Gastrocnemius medialis (tissue), 4 donors: ENCODE measurements at regions of chr2 and their contacts with region 1.

Region 1: DNA sequence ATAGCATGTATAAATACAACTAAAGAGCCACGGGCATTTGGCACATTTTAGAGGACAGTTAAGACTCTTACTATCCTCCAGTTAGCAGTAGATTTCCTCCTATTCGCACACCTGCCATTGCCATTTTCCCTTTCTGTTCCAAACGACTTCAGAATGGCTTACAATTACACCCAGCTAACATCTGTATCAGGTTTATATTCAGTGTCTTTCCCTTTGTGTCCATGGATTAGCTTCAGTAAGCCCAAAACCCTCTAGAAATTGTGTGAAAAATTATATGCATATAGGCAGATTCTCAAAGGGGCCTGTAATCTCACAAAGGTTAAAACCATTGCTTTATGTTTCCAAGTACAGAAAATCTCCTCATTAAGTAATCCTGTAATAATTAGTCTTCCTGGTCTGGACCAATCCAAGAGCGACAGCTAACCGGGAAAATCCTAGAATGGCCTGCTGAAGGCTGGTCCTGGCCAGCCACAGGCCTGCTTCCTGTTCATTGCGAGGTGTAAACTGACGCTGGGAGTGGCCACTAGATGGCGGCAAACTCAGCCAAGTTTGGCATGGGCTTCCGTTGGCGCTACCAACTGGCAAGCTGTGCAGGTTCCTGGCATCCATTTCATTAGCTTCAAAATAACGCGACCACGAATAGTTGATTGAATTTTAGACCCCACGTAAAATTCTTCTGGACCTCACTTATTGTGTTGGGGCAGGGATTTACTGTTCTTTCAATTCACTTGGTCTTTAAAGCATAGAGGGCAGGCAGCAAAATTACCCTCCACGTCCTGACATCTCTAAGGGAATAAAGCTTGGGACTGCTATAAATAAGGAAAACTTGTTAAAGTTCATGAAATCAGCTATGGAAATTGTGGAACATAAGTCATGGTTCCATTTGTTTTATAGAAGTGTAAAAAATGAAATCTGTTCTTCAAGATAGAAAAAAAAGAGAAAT is 17.1 kb downstream of the ARHGAP25 start:
- DNase-seq: peak; percentile 62 to 65
- ATAC-seq: peak; percentile 87 to 90
- H3K4me3 ChIP-seq: no peak overlapping the region
- H3K27ac ChIP-seq: no peak overlapping the region
- H3K4me1 ChIP-seq: peaks cover 4 to 10% of the 10 kb centered on the region in 2 donors
- H3K27me3 ChIP-seq: no peaks in the 10 kb centered on the region
- CTCF ChIP-seq: peak; percentile 63 to 91 (median 78)
- POLR2A ChIP-seq: no peak

Region 2: GRCh38 chr2:68734688-68735525 is 16.8 kb before region 1 on chr2 and contains the start of gene ARHGAP25:
- in situ Hi-C with region 1: no loop called
- intact Hi-C with region 1: no loop called
- DNase-seq: no peak
- ATAC-seq: no peak
- H3K4me3 ChIP-seq: peak within 1 kb of the TSS in 1 of 4 donors; percentile 28
- H3K27ac ChIP-seq: no peak within 1 kb of the TSS
- H3K4me1 ChIP-seq: no peaks in the 10 kb centered on the region
- H3K27me3 ChIP-seq: no peaks in the 10 kb centered on the region
- CTCF ChIP-seq: no peak
- POLR2A ChIP-seq: peak; percentile 6 to 31
- total RNA-seq, gene ARHGAP25: 1.9 to 6.8 (median 3.0) TPM

Region 3: DNA sequence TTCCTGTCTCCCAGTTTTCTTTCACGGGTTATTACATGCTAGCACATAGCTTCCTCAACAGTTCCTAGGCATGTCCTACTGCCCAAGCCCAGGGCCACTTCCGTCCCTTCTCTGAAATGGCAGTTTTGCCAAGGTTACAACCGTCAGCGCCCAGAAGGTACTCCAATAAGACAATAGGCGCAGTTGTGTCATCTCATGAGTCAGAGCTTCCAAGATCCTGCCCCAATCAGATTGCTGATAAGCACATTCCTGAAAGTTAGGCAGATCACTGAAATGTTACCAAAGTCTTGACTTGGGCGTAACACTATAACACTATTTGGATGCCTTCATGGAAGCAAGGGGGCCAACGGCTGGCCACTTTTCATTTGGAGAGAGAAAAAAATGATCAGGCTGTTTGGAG is 166.8 kb after region 1 on chr2:
- in situ Hi-C with region 1: loop called in 3 of 4 experiments (anchors 5 to 25 kb)
- intact Hi-C with region 1: no loop called
- DNase-seq: no peak
- ATAC-seq: no peak
- H3K4me3 ChIP-seq: no peak overlapping the region
- H3K27ac ChIP-seq: no peak overlapping the region
- H3K4me1 ChIP-seq: no peaks in the 10 kb centered on the region
- H3K27me3 ChIP-seq: no peaks in the 10 kb centered on the region
- CTCF ChIP-seq: no peak
- POLR2A ChIP-seq: no peak